ENCODE measurements at regions of chr12 and their contacts with region 1.

Region 1: DNA sequence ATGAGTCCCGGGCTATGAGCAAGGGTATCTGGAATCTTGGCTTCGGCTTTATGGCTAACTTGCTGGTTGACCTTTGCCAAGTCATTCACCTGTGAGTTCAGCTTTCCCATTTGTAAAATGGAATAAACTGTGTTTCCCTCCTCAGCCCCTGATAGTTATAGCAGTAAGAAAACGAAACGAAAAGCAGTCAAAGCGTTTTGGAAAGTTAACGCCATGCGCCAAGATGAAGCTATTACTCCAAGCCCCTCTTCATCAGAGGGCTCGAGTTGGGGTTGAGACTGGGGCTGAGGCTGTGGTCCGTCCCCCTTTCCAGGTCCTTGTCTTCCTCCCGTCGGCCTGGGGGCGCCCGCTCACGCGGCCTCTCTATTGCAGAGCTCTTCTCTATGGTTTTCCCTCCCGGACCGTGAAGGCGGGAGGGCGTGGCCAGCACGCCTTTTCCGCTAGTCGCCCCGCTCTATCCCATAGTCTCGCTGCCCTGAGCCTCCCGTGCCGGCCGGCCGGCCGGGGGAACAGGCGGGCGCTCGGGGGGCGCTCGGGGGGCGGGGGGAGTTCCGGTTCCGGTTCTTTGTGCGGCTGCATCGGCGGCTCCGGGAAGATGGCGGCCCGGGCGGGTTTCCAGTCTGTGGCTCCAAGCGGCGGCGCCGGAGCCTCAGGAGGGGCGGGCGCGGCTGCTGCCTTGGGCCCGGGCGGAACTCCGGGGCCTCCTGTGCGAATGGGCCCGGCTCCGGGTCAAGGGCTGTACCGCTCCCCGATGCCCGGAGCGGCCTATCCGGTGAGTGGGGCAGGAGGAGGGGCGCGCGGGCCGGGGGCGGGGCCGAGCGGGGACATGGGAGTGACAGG is at the start of gene SMARCD1:
- DNase-seq: peak; percentile 78
- H3K4me3 Mint-ChIP-seq: peak within 1 kb of the TSS; percentile 90
- H3K27ac Mint-ChIP-seq: peak within 1 kb of the TSS; percentile 93
- H3K4me1 Mint-ChIP-seq: peaks cover 31% of the 10 kb centered on the region
- H3K27me3 Mint-ChIP-seq: no peaks in the 10 kb centered on the region
- total RNA-seq, gene SMARCD1: 74.6 and 75.3 TPM in 2 replicates

Region 2: DNA sequence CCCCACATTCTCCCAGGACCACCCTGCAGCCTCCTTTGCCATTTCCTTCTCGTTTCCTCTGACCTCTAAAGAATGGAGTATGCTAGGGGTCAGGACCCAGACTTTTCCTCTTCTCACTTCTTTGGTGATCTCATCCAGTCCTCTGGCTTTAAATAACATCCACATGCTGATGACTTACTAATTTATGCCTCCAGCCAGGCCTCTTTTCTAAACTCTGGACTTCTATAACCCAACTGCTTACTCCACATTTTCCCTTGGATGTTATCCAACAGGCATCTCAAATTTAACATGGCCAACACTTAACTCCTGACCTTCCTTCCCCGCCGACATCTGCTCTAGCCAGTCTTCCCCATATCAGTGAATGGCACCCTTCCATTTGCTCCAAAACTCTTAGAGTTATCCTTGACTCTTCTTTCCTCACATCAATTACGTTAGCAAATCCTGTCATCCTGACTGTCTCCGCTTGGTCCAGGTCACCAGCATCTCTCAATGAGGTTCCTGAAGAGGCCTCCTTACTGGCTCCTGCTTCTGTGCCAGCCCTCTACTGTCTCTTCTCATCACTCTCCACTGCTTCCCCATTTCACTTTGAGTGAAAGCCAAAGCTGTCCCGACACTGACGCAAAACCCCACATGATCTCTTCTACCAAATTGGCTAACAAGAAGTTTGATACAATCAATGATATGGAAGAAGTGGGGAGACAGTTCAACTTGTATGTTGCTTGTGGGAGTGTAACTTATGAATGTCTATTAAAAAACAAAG is 300.9 kb before region 1 on chr12:
- intact Hi-C with region 1: no loop called
- DNase-seq: no peak
- H3K4me3 Mint-ChIP-seq: no peak overlapping the region
- H3K27ac Mint-ChIP-seq: no peak overlapping the region
- H3K4me1 Mint-ChIP-seq: no peaks in the 10 kb centered on the region
- H3K27me3 Mint-ChIP-seq: peaks cover 32% of the 10 kb centered on the region

Region 3: DNA sequence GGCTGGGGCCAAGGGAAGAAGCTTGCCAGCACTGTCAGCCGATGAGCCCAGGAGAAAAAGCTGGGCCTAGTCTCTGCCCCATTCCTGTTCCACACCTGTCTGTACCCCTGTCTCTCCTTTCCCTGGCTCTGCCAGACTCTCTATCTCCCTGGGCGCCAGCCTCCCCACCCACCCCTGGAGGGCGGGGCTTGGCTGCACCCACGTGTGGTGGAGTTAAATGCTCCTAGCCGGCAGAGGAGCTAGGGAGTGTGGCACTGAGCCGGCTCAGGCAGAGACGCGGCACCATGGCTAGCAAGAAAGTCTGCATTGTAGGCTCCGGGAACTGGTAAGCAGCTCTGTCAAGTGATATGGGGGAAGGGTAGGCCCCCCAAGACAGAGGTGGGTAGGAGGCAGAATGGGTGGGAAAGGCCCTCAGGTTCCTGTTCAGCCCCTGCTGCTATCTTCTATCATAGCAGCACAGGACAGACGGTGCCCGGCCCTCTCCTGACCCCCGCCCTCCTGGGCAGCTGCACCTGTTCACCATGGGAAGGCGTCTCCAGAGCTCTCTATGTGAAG is 18.8 kb after region 1 on chr12 and contains the start of gene GPD1:
- intact Hi-C with region 1: no loop called
- DNase-seq: no peak
- H3K4me3 Mint-ChIP-seq: no peak within 1 kb of the TSS
- H3K27ac Mint-ChIP-seq: no peak within 1 kb of the TSS
- H3K4me1 Mint-ChIP-seq: peaks cover 5% of the 10 kb centered on the region
- H3K27me3 Mint-ChIP-seq: peaks cover 2% of the 10 kb centered on the region
- total RNA-seq, gene GPD1: 0.29 and 0.88 TPM in 2 replicates

Region 4: DNA sequence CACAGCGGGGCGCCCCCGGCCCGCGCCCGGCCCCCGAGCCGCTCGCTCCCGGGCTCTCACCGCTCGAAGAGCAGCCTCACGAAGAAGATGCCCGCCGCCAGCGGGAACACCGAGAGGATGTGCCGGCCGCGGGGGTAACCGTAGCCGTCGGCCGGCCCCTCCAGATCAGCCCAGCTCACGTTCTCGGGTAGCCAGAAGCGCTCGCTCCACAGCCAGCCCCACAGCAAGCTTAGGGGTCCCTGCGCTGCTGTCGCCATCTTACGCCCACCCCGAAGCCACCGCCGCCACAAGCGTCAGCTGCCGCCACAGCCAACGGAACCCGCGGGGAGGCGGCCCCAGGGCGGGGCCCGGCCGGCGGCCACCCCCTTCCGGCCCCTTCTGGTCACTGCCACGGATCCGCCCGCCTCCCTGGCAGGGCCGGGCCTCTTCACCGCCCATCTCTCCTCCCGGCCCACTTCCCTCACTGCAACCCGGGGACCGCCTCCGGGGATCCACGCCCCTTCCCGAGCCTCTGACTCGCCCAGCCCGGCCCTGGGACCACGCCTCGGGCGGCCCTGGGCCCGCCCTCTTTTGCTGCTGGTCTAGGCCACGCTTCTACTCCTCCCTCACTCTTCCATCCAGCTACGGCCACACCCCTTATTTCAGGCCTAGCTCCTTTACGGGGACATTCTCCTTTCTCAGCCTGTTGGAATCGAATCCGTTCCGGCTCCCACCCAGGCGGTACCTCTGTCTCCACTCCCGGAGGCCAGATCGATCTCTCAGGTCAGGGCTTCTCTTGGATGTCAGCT is 82.2 kb after region 1 on chr12 and contains the start of gene CERS5:
- intact Hi-C with region 1: loop called (anchors 1 kb)
- DNase-seq: peak; percentile 98
- H3K4me3 Mint-ChIP-seq: peak within 1 kb of the TSS; percentile 99
- H3K27ac Mint-ChIP-seq: peak within 1 kb of the TSS; percentile 95
- H3K4me1 Mint-ChIP-seq: peaks cover 38% of the 10 kb centered on the region
- H3K27me3 Mint-ChIP-seq: no peaks in the 10 kb centered on the region
- total RNA-seq, gene CERS5: 64.2 and 67.9 TPM in 2 replicates

Region 5: GRCh38 chr12:50174971-50175715 is 90.1 kb after region 1 on chr12:
- intact Hi-C with region 1: loop called (anchors 1 kb)
- DNase-seq: no peak
- H3K4me3 Mint-ChIP-seq: no peak overlapping the region
- H3K27ac Mint-ChIP-seq: no peak overlapping the region
- H3K4me1 Mint-ChIP-seq: peaks cover 1% of the 10 kb centered on the region
- H3K27me3 Mint-ChIP-seq: no peaks in the 10 kb centered on the region

Region 6: DNA sequence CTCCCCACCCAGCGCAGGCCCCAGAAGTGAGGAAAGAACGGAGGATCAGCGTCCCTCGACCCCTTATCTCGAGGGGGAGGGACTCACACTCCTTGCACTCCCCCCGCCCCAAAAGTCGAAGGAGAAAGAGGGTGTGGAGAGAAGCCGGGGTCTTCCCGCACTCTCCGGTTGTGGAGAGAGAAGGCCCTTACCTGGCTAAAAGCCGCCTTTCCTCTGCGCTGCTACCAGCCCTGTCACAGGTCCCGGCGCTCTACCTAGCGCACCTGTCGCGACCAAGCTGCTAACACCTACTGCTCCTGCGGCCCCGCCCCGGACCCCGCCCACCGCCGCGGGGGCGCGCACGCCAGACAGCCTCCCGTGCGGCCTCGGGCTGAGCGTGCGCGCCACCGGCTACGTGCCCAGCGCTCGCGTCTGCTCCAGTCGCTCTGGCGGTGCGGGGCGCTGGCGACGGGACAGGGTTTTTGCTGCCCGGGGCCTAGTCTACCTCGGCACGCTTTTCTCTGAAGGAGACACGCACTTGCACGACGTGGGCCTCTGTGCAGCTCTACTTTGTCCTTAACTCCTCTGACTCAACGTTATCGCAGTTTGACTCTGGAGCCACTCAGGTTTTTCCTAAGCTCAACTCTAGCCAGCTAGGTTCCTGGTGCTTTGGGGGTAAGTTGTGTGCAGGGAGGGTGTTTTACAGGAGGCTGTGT is 198.4 kb after region 1 on chr12 and contains the start of gene LIMA1:
- intact Hi-C with region 1: loop called (anchors 1 kb)
- DNase-seq: peak; percentile 85
- H3K4me3 Mint-ChIP-seq: peak within 1 kb of the TSS; percentile 89
- H3K27ac Mint-ChIP-seq: peak within 1 kb of the TSS; percentile 74
- H3K4me1 Mint-ChIP-seq: peaks cover 17% of the 10 kb centered on the region
- H3K27me3 Mint-ChIP-seq: peaks cover 20% of the 10 kb centered on the region
- total RNA-seq, gene LIMA1: 64.0 and 68.4 TPM in 2 replicates